ENCODE measurements at regions of chr21 and their contacts with region 1.

Region 1: DNA sequence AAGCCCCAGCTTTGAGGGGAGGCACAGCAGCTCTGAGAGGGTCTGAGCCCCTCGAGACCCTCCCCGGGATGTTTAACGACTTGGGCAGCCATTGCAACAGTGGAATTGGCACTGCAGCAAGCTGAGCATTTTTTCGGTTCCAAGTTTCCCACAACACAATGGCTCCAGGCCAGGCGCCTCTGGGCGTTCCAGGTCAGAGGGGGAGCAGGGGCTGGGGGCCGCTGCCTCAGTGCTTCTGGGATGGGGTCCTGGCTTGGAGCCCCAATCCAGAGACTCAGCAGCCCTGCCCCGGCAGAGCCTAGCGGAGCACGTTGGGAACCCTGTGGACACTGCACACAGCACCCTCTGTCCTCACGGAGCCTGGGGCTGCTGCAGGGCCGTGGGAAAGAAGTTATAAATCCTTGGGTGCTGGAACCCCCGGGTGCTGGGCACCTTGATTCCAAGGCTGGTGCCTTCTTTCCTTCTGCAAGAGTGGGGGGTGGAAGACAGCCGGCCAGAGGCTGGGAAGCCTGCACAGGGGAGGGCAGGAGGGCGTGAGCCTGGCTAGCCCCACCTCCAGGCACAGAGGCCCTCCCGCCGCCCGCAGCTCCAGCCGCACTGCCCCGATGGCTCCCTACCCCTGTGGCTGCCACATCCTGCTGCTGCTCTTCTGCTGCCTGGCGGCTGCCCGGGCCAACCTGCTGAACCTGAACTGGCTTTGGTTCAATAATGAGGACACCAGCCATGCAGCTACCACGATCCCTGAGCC is 50.1 kb downstream of the COL18A1 start:
- DNase-seq: peak in 1 of 2 donors; percentile 88
- H3K4me3 ChIP-seq: peak overlapping the region; percentile 52 to 55
- H3K27ac ChIP-seq: peak overlapping the region; percentile 73 to 75
- H3K4me1 ChIP-seq: peaks cover 0 to 77% (median 66%) of the 10 kb centered on the region in 4 donors
- H3K27me3 ChIP-seq: no peaks in the 10 kb centered on the region
- CTCF ChIP-seq: no peak

Region 2: DNA sequence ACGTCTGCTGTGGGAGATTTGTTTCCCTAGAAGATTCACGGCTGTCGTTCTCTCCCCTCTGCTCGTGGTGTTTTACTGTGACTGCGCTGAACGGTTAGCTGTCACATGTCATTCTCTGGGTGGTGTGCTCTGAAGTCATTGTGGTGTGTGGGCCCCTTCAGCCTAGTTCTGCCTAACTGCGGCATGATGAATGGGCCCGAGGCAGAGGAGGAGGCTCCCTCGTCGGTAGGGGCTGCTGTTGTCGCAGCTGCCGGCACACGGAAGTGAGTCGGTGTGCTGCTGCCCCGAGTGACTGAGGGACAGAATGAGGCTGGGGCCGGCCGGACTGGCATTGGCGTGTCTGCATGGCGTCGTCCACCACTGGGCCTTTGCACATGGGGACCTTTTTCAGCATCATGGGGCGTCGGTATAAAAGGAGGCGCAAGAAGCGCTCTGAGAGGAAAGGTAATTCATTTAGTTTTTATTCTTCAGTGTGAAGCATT is 302.8 kb before region 1 on chr21:
- intact Hi-C with region 1: loop called (anchors 10 kb)
- DNase-seq: peak in 1 of 2 donors; percentile 74
- H3K4me3 ChIP-seq: no peak overlapping the region
- H3K27ac ChIP-seq: peak overlapping the region; percentile 18 to 31
- H3K4me1 ChIP-seq: peaks cover 0 to 73% (median 54%) of the 10 kb centered on the region in 4 donors
- H3K27me3 ChIP-seq: no peaks in the 10 kb centered on the region
- CTCF ChIP-seq: peak in 1 of 2 experiments; percentile 31

Measured in tibial artery (tissue), 4 donors.